Activated naive CD4-positive, alpha-beta T cell treated with anti-CD3 and anti-CD28 coated beads for 36 hours (primary cell): ENCODE measurements at regions of chr9 and their contacts with region 1.

Region 1: GRCh38 chr9:120714088-120714845 is at the start of gene MEGF9:
- DNase-seq: peak; percentile 99
- H3K4me3 Mint-ChIP-seq: peak within 1 kb of the TSS; percentile 84
- H3K27ac Mint-ChIP-seq: peak within 1 kb of the TSS; percentile 30
- H3K4me1 Mint-ChIP-seq: peaks cover 39% of the 10 kb centered on the region
- H3K27me3 Mint-ChIP-seq: no peaks in the 10 kb centered on the region
- total RNA-seq, gene MEGF9: 3.8 TPM

Region 2: GRCh38 chr9:120412425-120412951 is 301.8 kb before region 1 on chr9:
- CTCF ChIA-PET with region 1: no interaction called
- intact Hi-C with region 1: no loop called
- DNase-seq: no peak
- H3K4me3 Mint-ChIP-seq: no peak overlapping the region
- H3K27ac Mint-ChIP-seq: no peak overlapping the region
- H3K4me1 Mint-ChIP-seq: no peaks in the 10 kb centered on the region
- H3K27me3 Mint-ChIP-seq: no peaks in the 10 kb centered on the region

Region 3: GRCh38 chr9:120619751-120620655 is 94.3 kb before region 1 on chr9:
- CTCF ChIA-PET with region 1: interaction called, 8 read pairs
- intact Hi-C with region 1: loop called (anchors 1 kb)
- DNase-seq: peak; percentile 82
- H3K4me3 Mint-ChIP-seq: no peak overlapping the region
- H3K27ac Mint-ChIP-seq: no peak overlapping the region
- H3K4me1 Mint-ChIP-seq: peaks cover 3% of the 10 kb centered on the region
- H3K27me3 Mint-ChIP-seq: no peaks in the 10 kb centered on the region

Region 4: GRCh38 chr9:120792898-120793765 is 78.9 kb after region 1 on chr9 and contains the start of gene FBXW2:
- CTCF ChIA-PET with region 1: no interaction called
- intact Hi-C with region 1: loop called (anchors 5 kb)
- DNase-seq: peak; percentile 92
- H3K4me3 Mint-ChIP-seq: peak within 1 kb of the TSS; percentile 88
- H3K27ac Mint-ChIP-seq: peak within 1 kb of the TSS; percentile 92
- H3K4me1 Mint-ChIP-seq: peaks cover 46% of the 10 kb centered on the region
- H3K27me3 Mint-ChIP-seq: no peaks in the 10 kb centered on the region
- total RNA-seq, gene FBXW2: 60.8 to 64.4 TPM

Region 5: DNA sequence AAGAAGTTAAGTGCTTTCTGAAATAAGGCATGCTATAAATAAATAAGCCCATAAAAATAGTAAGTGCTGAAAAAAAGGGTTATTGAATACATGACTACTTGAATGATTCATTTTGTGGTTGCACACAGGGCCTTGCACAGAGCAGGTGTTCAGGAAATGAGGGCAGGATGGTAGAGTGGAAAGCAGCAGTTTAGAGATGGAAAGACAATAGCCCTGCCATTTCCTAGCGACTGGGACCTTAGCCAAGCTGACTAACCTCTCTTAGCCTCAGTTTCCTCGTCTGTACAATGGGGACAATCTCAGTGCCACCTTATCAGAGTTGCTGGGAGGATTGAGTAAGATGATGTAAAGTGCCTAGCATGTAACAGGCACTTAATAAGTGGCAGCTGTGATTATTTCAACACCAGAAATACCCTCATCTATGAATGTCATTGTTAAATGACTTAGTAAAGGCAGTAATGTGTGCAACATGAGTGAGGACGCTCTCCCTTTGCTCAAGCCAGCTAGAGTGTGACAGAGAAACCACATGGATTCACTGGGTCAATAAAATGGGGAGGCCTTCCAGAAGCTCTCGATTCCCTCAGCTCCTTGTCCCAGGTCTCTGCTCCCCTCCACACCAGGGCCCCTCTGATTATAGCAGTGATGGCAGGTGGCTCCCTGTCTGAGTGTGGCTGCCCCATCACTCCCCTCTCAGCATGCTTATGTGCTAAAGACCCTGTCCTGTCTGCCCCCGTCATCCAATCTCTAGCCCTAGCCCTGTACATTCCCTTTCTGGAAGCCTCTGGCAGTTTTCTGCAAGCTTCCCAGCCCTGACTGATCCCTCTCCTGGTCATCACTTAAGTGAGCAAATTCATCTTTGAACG is 178.7 kb after region 1 on chr9:
- CTCF ChIA-PET with region 1: no interaction called
- intact Hi-C with region 1: loop called (anchors 1 kb)
- DNase-seq: peak; percentile 86
- H3K4me3 Mint-ChIP-seq: peak overlapping the region; percentile 70
- H3K27ac Mint-ChIP-seq: peak overlapping the region; percentile 97
- H3K4me1 Mint-ChIP-seq: peaks cover 90% of the 10 kb centered on the region
- H3K27me3 Mint-ChIP-seq: no peaks in the 10 kb centered on the region

Region 6: GRCh38 chr9:120941022-120941770 is 226.9 kb after region 1 on chr9:
- CTCF ChIA-PET with region 1: no interaction called
- intact Hi-C with region 1: no loop called
- DNase-seq: no peak
- H3K4me3 Mint-ChIP-seq: no peak overlapping the region
- H3K27ac Mint-ChIP-seq: no peak overlapping the region
- H3K4me1 Mint-ChIP-seq: peaks cover 16% of the 10 kb centered on the region
- H3K27me3 Mint-ChIP-seq: no peaks in the 10 kb centered on the region

Region 7: GRCh38 chr9:121201738-121202533 is 487.7 kb after region 1 on chr9 and contains the start of gene RAB14:
- CTCF ChIA-PET with region 1: no interaction called
- intact Hi-C with region 1: loop called (anchors 5 kb)
- DNase-seq: peak; percentile 100
- H3K4me3 Mint-ChIP-seq: peak within 1 kb of the TSS; percentile 91
- H3K27ac Mint-ChIP-seq: peak within 1 kb of the TSS; percentile 95
- H3K4me1 Mint-ChIP-seq: peaks cover 42% of the 10 kb centered on the region
- H3K27me3 Mint-ChIP-seq: no peaks in the 10 kb centered on the region
- total RNA-seq, gene RAB14: 61.1 to 64.2 TPM